Posterior vena cava (tissue), 2 donors: ENCODE measurements at regions of chrX and their contacts with region 1.

Region 1: GRCh38 chrX:119325456-119325855 is 73.7 kb upstream of the SLC25A43 start:
- DNase-seq: no peak

Region 2: DNA sequence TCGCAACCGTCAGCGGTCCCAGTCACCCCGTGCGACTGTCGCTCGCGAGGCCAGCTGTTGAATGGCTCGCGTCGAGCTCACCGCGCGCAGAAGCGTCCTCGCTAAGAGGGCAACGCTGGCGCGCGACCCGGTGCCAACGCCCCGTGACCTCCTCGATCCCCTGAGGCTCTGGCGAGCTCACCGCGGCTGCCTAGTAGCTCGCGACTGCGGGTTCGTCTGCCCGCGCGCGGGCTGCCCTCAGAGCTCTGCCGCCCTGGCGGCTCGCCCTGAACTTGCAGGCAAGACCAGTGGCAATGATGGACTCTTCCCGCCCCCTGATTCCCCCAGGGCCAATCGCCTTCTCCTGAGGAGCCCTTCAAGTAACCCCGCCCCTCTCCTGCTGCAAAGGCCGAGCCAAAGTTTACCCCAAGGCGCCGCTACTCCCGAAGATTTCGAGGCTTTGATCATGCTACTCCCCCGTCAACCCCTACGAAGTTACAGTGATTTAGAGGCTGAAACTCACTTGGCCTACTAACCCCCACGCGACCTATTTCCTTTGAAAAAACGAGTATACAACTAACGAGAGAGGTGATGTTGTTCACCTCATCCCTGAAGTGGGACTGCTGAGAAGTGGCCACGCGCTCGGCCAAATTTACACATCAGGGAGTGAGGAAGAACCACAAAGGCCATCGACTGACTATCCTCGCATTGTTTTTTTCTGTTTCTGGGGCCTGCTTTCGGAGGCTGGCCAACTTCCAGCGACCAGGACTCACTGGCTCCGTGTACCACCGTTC is 51.9 kb before region 1 on chrX:
- intact Hi-C with region 1: loop called in 1 of 2 experiments (anchors 2 kb)
- DNase-seq: no peak

Region 3: DNA sequence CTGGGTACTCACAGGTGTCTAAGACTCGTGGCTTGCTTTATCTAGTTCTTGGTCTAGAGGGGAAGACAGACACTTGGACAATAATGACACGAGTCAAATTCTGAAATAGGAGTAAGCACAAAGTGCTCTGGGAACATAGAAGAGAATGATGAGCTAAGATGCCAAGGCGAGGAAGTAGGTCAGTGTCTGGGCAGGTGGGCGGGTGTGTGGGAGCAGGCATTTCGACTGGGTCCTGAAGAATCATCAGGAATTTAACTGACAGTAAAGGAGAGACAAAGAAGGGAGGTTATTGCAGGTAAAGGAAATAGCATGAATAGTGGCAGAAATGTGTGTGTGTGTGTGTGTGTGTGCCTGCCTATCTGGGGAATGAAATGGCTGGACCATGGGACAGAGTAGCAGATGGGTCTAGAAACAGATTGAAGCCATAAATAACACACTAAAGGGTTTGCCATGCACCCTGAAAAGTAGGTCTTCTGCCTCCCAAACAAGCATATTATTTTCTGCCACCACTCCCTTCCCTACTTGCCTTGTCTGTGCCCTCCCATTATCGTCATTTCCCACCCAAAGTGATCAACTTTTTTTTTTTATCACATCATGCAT is 15.2 kb after region 1 on chrX:
- intact Hi-C with region 1: no loop called
- DNase-seq: no peak

Region 4: GRCh38 chrX:119488749-119489148 is 163.3 kb after region 1 on chrX:
- intact Hi-C with region 1: no loop called
- DNase-seq: peak; percentile 76